ENCODE measurements at regions of chr11 and their contacts with region 1.

Region 1: DNA sequence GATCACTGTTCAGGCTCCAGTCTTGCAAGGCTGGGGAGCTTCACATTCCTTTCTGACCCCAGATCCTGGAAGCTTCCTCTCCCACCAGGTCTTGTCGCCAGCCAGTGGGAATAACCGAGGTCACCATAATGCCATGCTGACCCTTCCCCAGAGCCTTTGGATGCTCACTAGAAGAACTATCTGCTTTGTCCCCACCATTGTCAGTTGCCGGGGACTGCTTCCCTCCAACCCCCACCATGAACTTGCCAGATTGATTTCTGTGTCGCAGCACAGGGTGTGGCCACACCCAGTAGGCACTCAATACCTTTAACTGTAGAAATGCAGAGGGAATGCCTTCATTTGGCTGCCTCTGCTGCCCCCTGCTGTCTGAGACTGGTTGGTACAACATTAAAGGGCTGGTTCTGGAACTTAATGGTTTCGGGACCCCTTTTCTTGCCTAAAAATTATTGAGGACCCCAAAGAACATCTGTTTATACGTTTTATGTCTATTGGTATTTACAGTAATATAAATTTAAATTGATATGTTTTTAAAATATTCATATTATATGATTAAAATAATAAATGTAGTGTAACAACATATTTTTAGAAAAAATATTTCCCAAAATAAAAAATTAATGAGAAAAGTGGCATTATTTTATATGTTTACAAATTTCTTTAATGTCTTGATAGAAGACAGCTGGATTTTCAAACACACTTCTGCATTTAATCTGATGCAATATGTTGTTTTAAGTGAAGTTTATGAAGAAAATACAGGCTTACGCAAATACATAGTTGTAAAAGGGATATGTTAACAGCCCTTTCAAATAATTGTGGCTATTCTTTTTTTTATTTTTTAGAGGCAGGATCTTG is 6.7 kb upstream of the GDPD5 start:
- DNase-seq: peak; percentile 88
- ATAC-seq: peak; percentile 89
- H3K4me3 Mint-ChIP-seq: peak overlapping the region; percentile 44
- H3K27ac Mint-ChIP-seq: peak overlapping the region; percentile 39; the same call in 1 of the 2 replicates
- H3K4me1 Mint-ChIP-seq: peaks cover 18% of the 10 kb centered on the region
- H3K27me3 Mint-ChIP-seq: peaks cover 2% of the 10 kb centered on the region; the same call in 1 of the 2 replicates
- CTCF ChIP-seq: peak; percentile 72

Region 2: GRCh38 chr11:74004759-74005615 is 1527.4 kb before region 1 on chr11:
- CTCF ChIA-PET with region 1: no interaction called
- POLR2A ChIA-PET with region 1: no interaction called
- DNase-seq: no peak
- ATAC-seq: peak; percentile 69
- H3K4me3 Mint-ChIP-seq: no peak overlapping the region
- H3K27ac Mint-ChIP-seq: no peak overlapping the region
- H3K4me1 Mint-ChIP-seq: peaks cover 10% of the 10 kb centered on the region
- H3K27me3 Mint-ChIP-seq: no peaks in the 10 kb centered on the region
- CTCF ChIP-seq: no peak

Region 3: DNA sequence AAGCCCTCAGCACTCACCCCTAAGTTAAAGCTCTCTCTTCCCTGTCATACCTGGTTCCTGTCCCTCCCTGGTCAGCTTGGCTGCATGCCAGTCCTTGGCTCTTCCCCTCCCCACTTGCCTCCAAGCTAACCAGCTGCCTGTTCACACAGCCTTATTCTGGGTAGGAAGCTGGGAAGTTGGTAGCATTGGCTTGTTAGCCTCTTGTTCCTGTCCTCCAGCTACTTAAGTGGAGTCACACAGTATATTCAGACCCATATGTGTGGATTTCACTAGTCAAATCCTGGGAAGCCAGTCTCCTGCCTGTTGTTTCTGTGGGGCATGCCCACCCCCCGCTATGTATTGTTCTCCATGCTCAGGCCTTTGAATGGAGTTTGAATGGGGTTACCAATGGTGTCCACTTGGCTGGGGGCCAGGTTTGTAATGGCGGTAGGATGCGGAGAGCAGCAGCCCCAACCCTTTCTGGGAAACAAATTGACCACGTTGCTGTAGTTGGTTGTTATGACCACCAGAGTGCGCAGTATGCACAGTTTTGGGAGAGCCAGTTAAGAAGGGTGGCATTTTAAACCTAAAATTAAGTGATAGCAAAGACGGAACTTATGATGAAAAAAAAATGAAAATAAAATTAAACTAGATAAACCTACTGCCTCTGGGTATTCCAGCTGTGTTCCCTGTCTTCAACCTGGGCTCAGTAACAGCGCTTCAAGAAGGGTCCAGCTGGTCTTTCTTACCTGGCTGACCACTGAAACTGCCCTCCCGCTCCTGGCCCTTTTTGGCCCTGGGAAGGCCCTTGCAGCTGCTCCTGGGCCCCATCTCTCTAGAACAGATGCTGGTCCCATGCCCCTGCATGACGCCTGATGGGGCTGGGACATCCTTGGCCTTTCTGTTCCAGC is 143.8 kb before region 1 on chr11:
- CTCF ChIA-PET with region 1: interaction called, 15 read pairs
- POLR2A ChIA-PET with region 1: no interaction called
- DNase-seq: peak; percentile 75
- ATAC-seq: peak; percentile 78
- H3K4me3 Mint-ChIP-seq: no peak overlapping the region
- H3K27ac Mint-ChIP-seq: no peak overlapping the region
- H3K4me1 Mint-ChIP-seq: peaks cover 20% of the 10 kb centered on the region
- H3K27me3 Mint-ChIP-seq: peaks cover 2% of the 10 kb centered on the region; the same call in 1 of the 2 replicates
- CTCF ChIP-seq: peak; percentile 69

Region 4: DNA sequence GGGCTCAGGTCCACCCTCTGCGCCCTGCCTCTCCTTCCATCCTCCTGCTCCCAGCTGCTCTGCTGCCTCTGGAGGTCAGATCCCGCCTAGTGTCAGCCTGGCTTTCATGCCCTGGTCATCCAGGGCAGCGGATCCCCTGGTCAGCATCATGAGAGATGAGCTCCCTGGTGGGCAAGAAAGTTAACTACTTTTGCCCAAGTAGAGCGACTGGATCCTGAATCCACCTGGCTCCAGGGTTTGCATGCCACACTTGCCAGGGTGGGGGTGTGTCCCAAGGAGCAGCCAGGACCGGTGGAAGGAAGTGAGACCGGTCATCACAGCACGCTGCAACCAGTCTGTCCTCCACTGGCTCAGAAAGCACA is 100.3 kb before region 1 on chr11:
- CTCF ChIA-PET with region 1: interaction called, 31 read pairs
- POLR2A ChIA-PET with region 1: no interaction called
- DNase-seq: peak; percentile 36
- ATAC-seq: 0 out of 2 replicates have a peak, but pooled peaks have one; percentile 3
- H3K4me3 Mint-ChIP-seq: peak overlapping the region; percentile 51
- H3K27ac Mint-ChIP-seq: no peak overlapping the region
- H3K4me1 Mint-ChIP-seq: peaks cover 30% of the 10 kb centered on the region
- H3K27me3 Mint-ChIP-seq: peaks cover 63% of the 10 kb centered on the region
- CTCF ChIP-seq: no peak

Region 5: DNA sequence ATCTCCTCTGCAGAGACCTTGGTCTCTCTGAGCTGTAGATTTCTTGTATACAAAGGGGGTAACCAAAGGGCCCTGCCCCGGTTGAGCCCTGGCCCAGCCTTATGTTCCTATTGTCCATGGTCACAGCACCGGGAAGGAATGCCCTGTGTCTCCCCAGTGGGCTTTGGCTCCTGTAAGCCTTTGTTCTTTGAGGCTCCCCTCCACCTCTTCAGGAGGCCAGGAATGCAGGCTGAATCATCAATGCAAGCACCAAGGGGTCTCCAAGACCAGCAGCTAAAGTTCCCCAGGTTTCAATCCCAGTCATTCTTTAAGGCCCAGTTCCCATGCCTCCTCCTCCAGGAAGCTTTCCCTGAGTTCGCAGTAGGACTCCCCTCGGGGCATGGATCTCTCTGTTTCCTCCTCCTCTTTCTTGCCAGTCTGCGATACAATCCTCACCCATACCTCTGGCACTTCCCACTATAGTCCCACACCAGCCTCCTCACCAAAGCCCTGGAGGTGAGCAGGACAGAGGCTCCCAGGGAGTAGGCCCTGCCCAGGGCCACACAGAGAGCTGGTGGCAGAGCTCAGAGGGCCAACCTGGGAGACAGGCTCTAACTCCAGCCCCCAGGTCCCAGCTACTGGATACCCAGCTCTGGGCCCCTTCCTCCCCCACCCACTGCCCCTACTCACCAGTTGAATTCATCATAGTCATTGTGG is 70.2 kb before region 1 on chr11:
- CTCF ChIA-PET with region 1: interaction called, 11 read pairs
- POLR2A ChIA-PET with region 1: no interaction called
- DNase-seq: peak; percentile 30
- ATAC-seq: peak; percentile 70
- H3K4me3 Mint-ChIP-seq: no peak overlapping the region
- H3K27ac Mint-ChIP-seq: peak overlapping the region; percentile 18; the same call in 1 of the 2 replicates
- H3K4me1 Mint-ChIP-seq: peaks cover 38% of the 10 kb centered on the region
- H3K27me3 Mint-ChIP-seq: no peaks in the 10 kb centered on the region
- CTCF ChIP-seq: no peak

Region 6: GRCh38 chr11:75547580-75548058 is 15.2 kb after region 1 on chr11:
- CTCF ChIA-PET with region 1: interaction called, 10 read pairs
- POLR2A ChIA-PET with region 1: no interaction called
- DNase-seq: peak; percentile 84
- ATAC-seq: peak; percentile 92
- H3K4me3 Mint-ChIP-seq: no peak overlapping the region
- H3K27ac Mint-ChIP-seq: peak overlapping the region; percentile 85; the same call in 1 of the 2 replicates
- H3K4me1 Mint-ChIP-seq: peaks cover 9% of the 10 kb centered on the region
- H3K27me3 Mint-ChIP-seq: peaks cover 6% of the 10 kb centered on the region; the same call in 1 of the 2 replicates
- CTCF ChIP-seq: peak; percentile 68

Region 7: DNA sequence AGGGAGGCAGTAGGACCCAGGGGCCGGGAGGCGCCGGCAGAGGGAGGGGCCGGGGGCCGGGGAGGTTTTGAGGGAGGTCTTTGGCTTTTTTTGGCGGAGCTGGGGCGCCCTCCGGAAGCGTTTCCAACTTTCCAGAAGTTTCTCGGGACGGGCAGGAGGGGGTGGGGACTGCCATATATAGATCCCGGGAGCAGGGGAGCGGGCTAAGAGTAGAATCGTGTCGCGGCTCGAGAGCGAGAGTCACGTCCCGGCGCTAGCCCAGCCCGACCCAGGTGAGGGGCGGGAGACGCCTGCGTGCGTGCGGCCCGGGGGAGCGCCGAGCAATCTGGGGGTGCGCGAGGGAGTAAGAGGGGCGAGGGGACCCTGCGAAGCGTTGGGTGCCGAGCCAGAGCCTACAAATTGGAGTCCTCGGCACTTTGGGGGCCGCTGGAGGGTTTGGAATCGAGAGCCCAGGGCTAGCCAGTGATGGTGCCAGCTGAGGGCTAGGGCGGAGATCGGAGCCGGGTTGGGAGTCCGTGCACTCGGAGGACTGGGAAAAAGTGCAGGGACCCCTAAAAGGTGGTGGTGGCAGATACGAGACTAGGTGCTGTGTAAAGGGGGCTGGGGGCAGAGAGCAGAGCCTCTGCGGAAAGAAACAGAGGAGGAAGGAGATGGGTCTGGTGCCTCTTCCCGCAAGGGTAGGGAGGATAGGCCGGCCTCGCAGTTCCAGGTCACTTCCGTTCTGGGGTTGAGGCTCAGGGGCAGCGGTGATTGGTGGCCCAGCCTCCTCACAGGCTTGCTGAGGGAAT is 29.8 kb after region 1 on chr11 and contains the start of gene SERPINH1:
- CTCF ChIA-PET with region 1: interaction called, 21 read pairs
- POLR2A ChIA-PET with region 1: interaction called, 3 read pairs
- DNase-seq: peak; percentile 78
- ATAC-seq: peak; percentile 58
- H3K4me3 Mint-ChIP-seq: peak within 1 kb of the TSS; percentile 96
- H3K27ac Mint-ChIP-seq: peak within 1 kb of the TSS; percentile 99
- H3K4me1 Mint-ChIP-seq: peaks cover 74% of the 10 kb centered on the region
- H3K27me3 Mint-ChIP-seq: no peaks in the 10 kb centered on the region
- CTCF ChIP-seq: no peak
- total RNA-seq, gene SERPINH1: 411 to 478 TPM (median 473 TPM) in 3 replicates

Region 8: DNA sequence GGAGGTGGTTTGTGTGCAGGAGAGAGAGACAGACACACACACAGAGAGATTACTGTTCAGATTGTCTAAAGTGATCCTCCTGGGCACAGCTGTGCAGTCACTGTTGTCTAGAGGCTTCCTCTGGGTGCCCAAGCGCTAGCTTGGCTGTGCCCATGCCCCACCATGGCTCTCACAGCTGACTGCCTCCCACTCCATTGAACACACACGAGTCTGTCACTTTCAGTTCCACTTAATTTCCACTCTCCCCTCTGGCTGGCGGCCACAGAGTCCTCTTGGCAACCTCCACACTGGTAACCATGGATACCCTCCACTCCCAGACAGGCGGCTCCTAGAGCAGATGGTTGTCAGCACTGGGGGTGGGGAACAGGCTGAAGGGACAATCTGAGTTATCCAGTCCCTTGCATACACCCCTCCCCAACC is 107.3 kb after region 1 on chr11:
- CTCF ChIA-PET with region 1: no interaction called
- POLR2A ChIA-PET with region 1: no interaction called
- DNase-seq: no peak
- ATAC-seq: peak; percentile 32; the same call in 1 of the 2 replicates
- H3K4me3 Mint-ChIP-seq: no peak overlapping the region
- H3K27ac Mint-ChIP-seq: no peak overlapping the region
- H3K4me1 Mint-ChIP-seq: peaks cover 12% of the 10 kb centered on the region
- H3K27me3 Mint-ChIP-seq: no peaks in the 10 kb centered on the region; the same call in 1 of the 2 replicates
- CTCF ChIP-seq: no peak